B cell (primary cell): ENCODE measurements at regions of chr1 and their contacts with region 1.

Region 1: DNA sequence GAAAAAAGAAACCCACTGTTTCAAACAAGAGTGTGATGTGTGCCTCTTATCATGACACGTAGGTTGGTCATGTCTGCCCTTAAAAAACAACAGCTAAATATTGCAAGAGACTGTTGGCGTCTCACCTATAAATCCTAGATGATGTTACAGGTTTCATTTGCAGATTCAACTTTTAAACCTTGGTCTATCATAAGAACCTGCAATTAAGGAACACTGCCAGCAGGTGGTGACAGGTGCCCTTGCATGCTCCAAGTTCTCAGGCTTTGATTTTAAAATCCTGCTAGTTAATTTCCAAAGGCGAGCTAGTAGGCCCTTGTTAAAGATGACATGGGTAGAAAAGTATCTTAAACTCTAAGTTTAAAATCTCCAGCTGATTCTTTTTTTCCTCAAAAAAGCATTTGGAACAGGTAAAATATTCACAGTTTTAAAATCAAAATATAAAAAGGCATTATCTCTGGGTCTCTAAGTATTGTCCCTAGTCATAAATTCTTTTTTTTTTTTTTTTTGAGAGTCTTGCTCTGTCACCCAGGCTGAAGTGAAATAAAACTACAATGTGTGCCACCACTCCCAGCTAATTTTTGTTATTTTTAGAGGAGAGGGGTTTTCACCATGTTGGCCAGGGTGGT is 39.1 kb downstream of the CLSTN1 start:
- DNase-seq: peak; percentile 80
- ATAC-seq: peak; percentile 48
- H3K4me3 ChIP-seq: no peak overlapping the region
- H3K4me3 Mint-ChIP-seq: no peak overlapping the region
- H3K27ac ChIP-seq: no peak overlapping the region
- H3K27ac Mint-ChIP-seq: peak overlapping the region; percentile 32
- H3K4me1 ChIP-seq: peaks cover 18 to 29% of the 10 kb centered on the region in 2 donors
- H3K4me1 Mint-ChIP-seq: peaks cover 25% of the 10 kb centered on the region
- H3K27me3 ChIP-seq: no peaks in the 10 kb centered on the region
- H3K27me3 Mint-ChIP-seq: no peaks in the 10 kb centered on the region
- CTCF ChIP-seq: peak; percentile 92

Region 2: DNA sequence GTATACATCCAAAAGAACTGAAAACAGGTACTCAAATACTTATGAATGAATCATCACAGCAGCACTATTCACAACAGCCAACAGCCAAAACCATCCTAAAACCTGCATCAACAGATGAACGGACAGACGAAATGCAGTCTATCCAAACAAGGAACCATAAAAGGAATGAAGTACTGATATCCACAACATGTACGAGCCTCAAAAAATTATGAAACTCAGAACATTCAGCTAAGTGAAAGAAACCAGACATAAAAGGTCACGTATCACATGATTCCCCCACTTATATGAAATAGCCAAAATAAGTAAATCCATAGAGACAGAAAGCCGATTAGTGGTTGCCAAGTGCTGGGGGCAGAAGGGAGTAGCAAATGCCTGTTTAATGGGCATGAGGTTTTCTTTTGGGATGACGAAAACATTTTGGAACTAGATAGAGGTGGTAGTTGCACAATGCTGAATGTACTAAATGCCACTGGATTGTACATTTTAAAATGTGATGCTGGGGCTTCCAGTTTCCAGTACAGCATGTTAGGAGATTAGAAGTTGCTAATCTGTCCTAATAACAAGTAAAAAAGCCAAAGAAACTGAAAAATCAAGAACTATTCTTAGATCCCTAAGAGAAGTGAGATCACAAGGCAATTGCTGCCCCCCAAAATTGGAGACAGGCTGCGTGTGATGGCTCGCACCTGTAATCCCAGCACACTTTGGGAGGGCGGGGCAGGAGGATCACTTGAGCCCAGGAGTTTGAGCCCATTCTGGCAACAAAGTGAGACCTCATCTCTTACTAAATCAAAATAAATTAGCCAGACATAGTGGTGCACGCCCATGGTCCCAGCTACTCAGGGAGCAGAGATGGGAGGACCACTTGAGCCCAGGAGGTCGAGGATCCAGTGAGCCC is 13.9 kb after region 1 on chr1:
- CTCF ChIA-PET with region 1: interaction called, 82 read pairs
- POLR2A ChIA-PET with region 1: interaction called, 10 read pairs
- intact Hi-C with region 1: loop called (anchors 1 kb)
- DNase-seq: no peak
- ATAC-seq: no peak
- H3K4me3 ChIP-seq: no peak overlapping the region
- H3K4me3 Mint-ChIP-seq: no peak overlapping the region
- H3K27ac ChIP-seq: no peak overlapping the region
- H3K27ac Mint-ChIP-seq: no peak overlapping the region
- H3K4me1 ChIP-seq: peaks cover 8% of the 10 kb centered on the region in 2 donors
- H3K4me1 Mint-ChIP-seq: peaks cover 42% of the 10 kb centered on the region
- H3K27me3 ChIP-seq: no peaks in the 10 kb centered on the region
- H3K27me3 Mint-ChIP-seq: no peaks in the 10 kb centered on the region
- CTCF ChIP-seq: no peak

Region 3: GRCh38 chr1:9823943-9824701 is 39.5 kb after region 1 on chr1 and contains the start of gene CLSTN1:
- CTCF ChIA-PET with region 1: interaction called, 14 read pairs
- POLR2A ChIA-PET with region 1: no interaction called
- intact Hi-C with region 1: loop called (anchors 2 kb)
- DNase-seq: peak; percentile 90
- ATAC-seq: peak; percentile 79
- H3K4me3 ChIP-seq: peak within 1 kb of the TSS; percentile 71 to 86 (median 77)
- H3K4me3 Mint-ChIP-seq: peak within 1 kb of the TSS; percentile 95
- H3K27ac ChIP-seq: peak within 1 kb of the TSS; percentile 47 to 73
- H3K27ac Mint-ChIP-seq: peak within 1 kb of the TSS; percentile 94
- H3K4me1 ChIP-seq: peaks cover 38 to 39% of the 10 kb centered on the region in 2 donors
- H3K4me1 Mint-ChIP-seq: peaks cover 41% of the 10 kb centered on the region
- H3K27me3 ChIP-seq: no peaks in the 10 kb centered on the region
- H3K27me3 Mint-ChIP-seq: no peaks in the 10 kb centered on the region
- CTCF ChIP-seq: no peak
- total RNA-seq, gene CLSTN1: 75.8 and 81.4 TPM in 2 replicates

Region 4: DNA sequence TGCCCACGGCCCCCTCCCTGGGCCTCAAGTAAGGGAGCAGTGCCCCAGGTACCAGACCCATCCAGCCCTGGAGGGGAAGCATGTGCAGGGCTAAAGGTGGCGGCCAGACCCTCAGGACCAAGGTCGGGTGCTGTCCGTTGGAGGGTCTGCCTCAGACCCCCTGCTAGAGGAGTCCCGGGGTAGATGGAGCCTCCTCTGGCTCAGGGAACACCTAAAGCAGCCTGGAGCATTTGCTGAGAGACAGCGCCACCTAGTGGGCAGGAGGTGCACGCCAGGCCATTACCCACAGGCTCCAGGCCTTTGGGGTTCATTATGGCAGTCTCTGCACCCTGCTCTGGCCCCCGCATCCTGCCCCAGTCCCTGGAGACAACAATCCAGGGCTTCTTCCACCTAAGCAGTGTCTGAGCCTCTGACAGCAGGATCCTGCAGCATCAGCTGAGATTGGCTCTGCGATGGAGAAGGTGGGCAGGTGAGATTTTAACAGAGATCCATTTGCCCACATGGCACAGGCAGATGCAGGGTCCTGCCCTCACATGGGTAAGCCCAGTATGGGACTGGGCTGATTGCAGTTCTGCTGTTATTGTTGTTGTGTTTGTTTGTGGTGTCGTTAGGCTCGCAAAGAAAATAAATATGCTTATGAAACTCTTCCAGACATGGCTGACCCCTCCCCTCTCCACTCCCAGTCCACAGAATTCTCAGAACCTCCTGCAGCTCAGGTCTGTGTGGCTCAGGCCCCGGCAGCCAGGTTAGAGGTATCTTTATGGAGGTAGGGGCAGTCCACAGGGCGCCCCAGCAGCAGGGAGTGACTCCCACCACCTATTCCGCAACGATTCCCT is 83.0 kb after region 1 on chr1:
- CTCF ChIA-PET with region 1: interaction called, 281 read pairs
- POLR2A ChIA-PET with region 1: no interaction called
- intact Hi-C with region 1: no loop called
- DNase-seq: peak; percentile 88
- ATAC-seq: peak; percentile 96
- H3K4me3 ChIP-seq: no peak overlapping the region
- H3K4me3 Mint-ChIP-seq: no peak overlapping the region
- H3K27ac ChIP-seq: no peak overlapping the region
- H3K27ac Mint-ChIP-seq: no peak overlapping the region
- H3K4me1 ChIP-seq: peaks cover 0 to 8% of the 10 kb centered on the region in 2 donors
- H3K4me1 Mint-ChIP-seq: peaks cover 3% of the 10 kb centered on the region
- H3K27me3 ChIP-seq: no peaks in the 10 kb centered on the region
- H3K27me3 Mint-ChIP-seq: no peaks in the 10 kb centered on the region
- CTCF ChIP-seq: peak; percentile 96

Region 5: GRCh38 chr1:9922342-9922741 is 137.7 kb after region 1 on chr1:
- CTCF ChIA-PET with region 1: no interaction called
- POLR2A ChIA-PET with region 1: interaction called, 10 read pairs
- intact Hi-C with region 1: no loop called
- DNase-seq: no peak
- ATAC-seq: no peak
- H3K4me3 ChIP-seq: no peak overlapping the region
- H3K4me3 Mint-ChIP-seq: no peak overlapping the region
- H3K27ac ChIP-seq: no peak overlapping the region
- H3K27ac Mint-ChIP-seq: no peak overlapping the region
- H3K4me1 ChIP-seq: peaks cover 4 to 5% of the 10 kb centered on the region in 2 donors
- H3K4me1 Mint-ChIP-seq: peaks cover 5% of the 10 kb centered on the region
- H3K27me3 ChIP-seq: no peaks in the 10 kb centered on the region
- H3K27me3 Mint-ChIP-seq: no peaks in the 10 kb centered on the region
- CTCF ChIP-seq: no peak